Body of pancreas (tissue), 4 donors: ENCODE measurements at regions of chr6 and their contacts with region 1.

Region 1: GRCh38 chr6:14144678-14145113 is 27.1 kb downstream of the CD83 start:
- DNase-seq: peak; percentile 57 to 67 (median 61)
- ATAC-seq: peak; percentile 79
- H3K4me3 ChIP-seq: no peak overlapping the region
- H3K27ac ChIP-seq: no peak overlapping the region
- H3K4me1 ChIP-seq: no peaks in the 10 kb centered on the region
- H3K27me3 ChIP-seq: no peaks in the 10 kb centered on the region
- CTCF ChIP-seq: peak; percentile 73 to 95 (median 80)
- POLR2A ChIP-seq: no peak

Region 2: GRCh38 chr6:13908955-13909381 is 235.7 kb before region 1 on chr6:
- intact Hi-C with region 1: loop called (anchors 10 kb)
- DNase-seq: peak; percentile 40 to 62 (median 45)
- ATAC-seq: peak; percentile 81
- H3K4me3 ChIP-seq: no peak overlapping the region
- H3K27ac ChIP-seq: no peak overlapping the region
- H3K4me1 ChIP-seq: no peaks in the 10 kb centered on the region
- H3K27me3 ChIP-seq: no peaks in the 10 kb centered on the region
- CTCF ChIP-seq: peak; percentile 78 to 92 (median 89)
- POLR2A ChIP-seq: no peak

Region 3: DNA sequence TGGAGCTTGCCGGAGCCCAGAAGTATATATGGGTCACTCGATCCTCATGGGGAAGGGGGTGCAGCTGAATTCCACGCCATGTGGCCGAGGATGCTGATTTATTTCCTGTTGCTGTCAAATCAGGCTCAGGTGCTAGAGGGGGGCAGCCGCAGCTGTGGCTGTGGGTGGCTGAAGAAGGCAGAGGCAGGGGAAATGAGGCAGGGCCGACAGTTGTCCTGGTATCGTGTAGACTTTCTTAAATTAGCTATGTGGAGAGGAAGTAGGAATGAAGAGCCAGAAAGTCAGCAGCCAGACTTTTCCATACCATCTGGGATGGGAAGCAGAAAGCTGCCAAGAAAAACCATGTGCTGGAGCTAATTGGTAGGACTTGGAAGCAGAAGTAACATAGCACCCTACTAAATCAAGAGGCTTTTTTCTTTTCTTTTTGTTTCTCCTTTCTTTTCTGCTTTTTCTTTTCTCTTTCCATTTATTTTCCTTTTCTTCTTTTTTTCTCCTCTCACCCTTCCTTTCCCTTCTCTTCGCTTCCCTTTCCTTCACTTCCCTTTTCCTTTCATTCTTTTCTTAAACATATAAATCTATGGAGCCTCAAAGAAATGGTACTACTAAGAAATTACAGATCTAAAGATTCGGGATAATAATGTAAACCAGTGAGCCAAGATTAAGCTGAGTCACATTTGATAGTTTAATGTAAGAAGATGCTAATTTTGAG is 117.7 kb before region 1 on chr6:
- intact Hi-C with region 1: no loop called
- DNase-seq: no peak
- ATAC-seq: no peak
- H3K4me3 ChIP-seq: no peak overlapping the region
- H3K27ac ChIP-seq: no peak overlapping the region
- H3K4me1 ChIP-seq: peaks cover 12% of the 10 kb centered on the region
- H3K27me3 ChIP-seq: no peaks in the 10 kb centered on the region
- CTCF ChIP-seq: no peak
- POLR2A ChIP-seq: no peak

Region 4: GRCh38 chr6:14108571-14109410 is 35.9 kb before region 1 on chr6:
- intact Hi-C with region 1: no loop called
- DNase-seq: peak in 1 of 4 donors; percentile 57
- ATAC-seq: no peak
- H3K4me3 ChIP-seq: no peak overlapping the region
- H3K27ac ChIP-seq: peak overlapping the region in 1 of 4 donors; percentile 41
- H3K4me1 ChIP-seq: no peaks in the 10 kb centered on the region
- H3K27me3 ChIP-seq: no peaks in the 10 kb centered on the region
- CTCF ChIP-seq: no peak
- POLR2A ChIP-seq: no peak